ENCODE measurements at regions of chr9 and their contacts with region 1.

Region 1: DNA sequence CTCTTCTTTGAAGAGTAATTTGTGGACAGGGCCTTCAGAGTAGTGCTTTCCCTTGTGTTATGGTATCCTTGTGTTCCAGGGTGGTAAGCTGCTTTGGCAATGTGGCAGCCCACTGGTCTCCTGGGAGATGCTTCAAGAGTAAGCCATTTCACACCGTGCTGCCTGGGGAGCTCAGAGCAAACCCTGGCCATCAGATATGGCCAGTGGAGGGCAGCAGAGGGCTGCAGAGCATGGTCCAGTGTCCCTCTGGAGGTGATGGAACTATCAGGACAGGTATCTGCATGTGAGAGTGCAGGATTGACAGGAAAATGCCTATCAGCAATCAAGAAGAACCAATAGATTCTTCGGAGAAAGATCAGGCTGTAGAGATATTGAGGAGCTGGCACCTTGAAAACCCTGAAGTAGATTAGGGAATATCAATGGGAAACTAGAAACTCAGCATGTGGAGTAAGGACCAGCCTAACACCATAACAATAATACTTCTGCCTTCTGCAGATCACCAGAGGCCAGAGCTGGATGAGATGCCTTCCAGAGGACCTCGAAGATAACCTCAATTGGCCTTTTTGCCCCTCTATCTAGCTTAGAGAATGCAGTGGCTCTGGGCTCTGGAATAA is 90.8 kb downstream of the PLPPR1 start:
- DNase-seq: no peak
- ATAC-seq: peak; percentile 98
- H3K4me3 ChIP-seq: no peak overlapping the region
- H3K27ac ChIP-seq: no peak overlapping the region
- H3K4me1 ChIP-seq: no peaks in the 10 kb centered on the region
- H3K27me3 ChIP-seq: no peaks in the 10 kb centered on the region
- CTCF ChIP-seq: peak; percentile 72 to 83 (median 80)
- EP300 ChIP-seq: no peak
- POLR2A ChIP-seq: no peak
- RAD21 ChIP-seq: peak; percentile 66

Region 2: DNA sequence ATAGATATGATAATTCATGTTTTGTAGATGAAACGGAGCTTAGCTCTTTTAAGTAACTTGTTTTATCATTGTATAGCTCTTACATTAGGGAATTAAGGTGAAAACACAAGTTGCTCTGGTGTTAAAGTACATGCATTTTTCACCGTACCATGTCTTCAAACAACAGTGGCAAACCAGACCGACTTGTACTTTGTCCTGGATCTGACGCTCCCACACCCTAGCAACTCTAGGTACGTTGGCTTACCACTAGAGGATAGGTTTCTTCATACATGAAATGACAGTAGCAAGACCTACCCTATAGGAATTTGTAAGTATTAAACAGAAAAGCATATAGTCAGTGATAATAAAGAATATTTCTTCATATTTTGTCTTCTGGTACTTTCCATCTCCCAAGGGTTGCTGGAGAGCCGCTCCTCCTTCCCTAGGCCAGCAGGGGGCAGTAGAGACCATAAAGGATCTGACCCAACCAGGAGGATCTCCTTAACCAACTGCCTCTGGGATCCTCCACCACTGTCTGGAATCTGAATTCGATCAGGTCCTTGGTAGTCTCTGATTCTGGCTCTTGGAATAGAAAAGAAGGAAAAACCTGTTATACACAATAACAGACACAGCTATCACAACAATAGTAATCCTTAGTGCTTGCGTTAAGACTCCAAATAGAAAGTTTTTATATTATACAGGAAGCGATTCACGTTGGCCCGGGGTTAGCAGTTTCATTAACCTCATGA is 404.8 kb before region 1 on chr9:
- CTCF ChIA-PET with region 1: interaction called, 3 read pairs
- POLR2A ChIA-PET with region 1: no interaction called
- RAD21 ChIA-PET with region 1: no interaction called
- SMC1A ChIA-PET with region 1: no interaction called
- in situ Hi-C with region 1: no loop called
- intact Hi-C with region 1: loop called (anchors 5 kb)
- DNase-seq: no peak
- ATAC-seq: peak; percentile 84
- H3K4me3 ChIP-seq: no peak overlapping the region
- H3K27ac ChIP-seq: no peak overlapping the region
- H3K4me1 ChIP-seq: no peaks in the 10 kb centered on the region
- H3K27me3 ChIP-seq: no peaks in the 10 kb centered on the region
- CTCF ChIP-seq: peak; percentile 78 to 84 (median 81)
- EP300 ChIP-seq: no peak
- POLR2A ChIP-seq: no peak
- RAD21 ChIP-seq: peak; percentile 71